Ascending aorta (tissue), 2 donors: ENCODE measurements at regions of chr16 and their contacts with region 1.

Region 1: DNA sequence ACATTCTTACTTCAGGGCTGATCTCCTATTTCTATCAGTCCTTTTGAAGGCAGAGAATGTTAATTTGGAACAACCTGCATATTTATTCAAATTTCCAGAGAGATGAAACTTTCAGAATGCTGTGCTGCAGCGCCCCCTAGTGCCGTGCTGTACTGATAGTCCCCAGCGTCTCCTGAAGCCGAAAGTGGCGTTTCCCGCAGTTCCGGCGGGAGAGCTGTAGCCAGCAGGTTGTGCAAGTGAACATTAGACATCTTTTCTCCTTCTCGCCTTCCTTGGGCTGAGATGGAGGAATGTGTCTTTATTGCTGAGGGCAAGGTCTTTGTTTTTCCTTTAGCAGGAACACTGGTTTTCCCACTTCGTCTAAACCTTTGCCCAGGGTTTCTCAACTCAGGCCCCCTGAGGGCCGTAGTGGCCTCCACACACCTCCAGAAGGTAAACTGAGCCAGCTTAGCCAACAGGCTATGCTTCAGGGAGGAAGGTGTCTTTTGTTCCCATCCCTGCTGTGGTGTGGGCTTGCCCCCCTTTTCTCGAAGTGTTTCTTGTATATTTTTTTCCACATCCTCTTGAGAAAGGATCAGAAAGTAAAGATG is 26.4 kb downstream of the USP10 start:
- DNase-seq: peak; percentile 50 to 94
- H3K4me3 ChIP-seq: peak overlapping the region in 1 of 2 donors; percentile 11
- H3K27ac ChIP-seq: peak overlapping the region in 1 of 2 donors; percentile 10
- H3K4me1 ChIP-seq: peaks cover 6 to 14% of the 10 kb centered on the region in 2 donors
- H3K27me3 ChIP-seq: no peaks in the 10 kb centered on the region
- CTCF ChIP-seq: peak; percentile 89 to 92 (median 89)

Region 2: GRCh38 chr16:84511180-84511824 is 214.9 kb before region 1 on chr16:
- intact Hi-C with region 1: loop called (anchors 1 kb)
- DNase-seq: peak; percentile 46 to 93
- H3K4me3 ChIP-seq: peak overlapping the region in 1 of 2 donors; percentile 4
- H3K27ac ChIP-seq: no peak overlapping the region
- H3K4me1 ChIP-seq: no peaks in the 10 kb centered on the region
- H3K27me3 ChIP-seq: no peaks in the 10 kb centered on the region
- CTCF ChIP-seq: peak; percentile 95 to 98 (median 95)

Region 3: DNA sequence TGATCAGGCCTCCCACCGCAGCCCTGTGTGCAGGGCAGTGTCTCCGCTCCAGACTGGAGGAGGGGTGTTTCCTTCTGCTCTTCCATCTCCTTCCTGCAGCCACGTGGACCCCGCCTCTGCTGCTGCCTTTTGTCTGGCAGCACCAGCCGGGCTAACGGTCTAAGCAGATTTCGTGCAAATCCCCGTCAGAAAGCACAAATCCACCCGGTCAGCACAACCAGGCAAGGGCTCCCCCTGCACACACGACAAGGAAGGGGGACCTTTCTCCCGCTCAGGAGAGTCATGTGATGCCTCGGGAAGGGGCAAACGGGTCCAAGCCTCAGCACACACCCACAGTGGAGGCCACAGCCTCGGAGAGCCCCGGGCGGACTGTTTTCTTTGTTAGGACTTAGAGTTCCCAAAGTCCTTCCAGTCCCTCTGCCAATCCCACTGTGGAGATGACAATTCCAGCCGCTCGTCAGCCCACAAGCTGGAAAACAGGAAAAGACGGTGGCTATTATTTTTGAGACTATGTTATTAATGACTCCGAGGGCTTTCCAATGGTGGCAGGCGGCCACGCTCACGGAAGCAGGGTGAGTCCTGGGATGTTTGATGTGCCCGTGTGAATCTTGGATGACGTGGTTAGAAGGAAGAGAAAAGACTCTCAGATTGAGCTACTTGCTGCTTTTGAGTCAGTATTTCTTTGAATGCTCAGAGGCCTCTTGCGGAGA is 199.2 kb before region 1 on chr16:
- intact Hi-C with region 1: loop called (anchors 5 kb)
- DNase-seq: no peak
- H3K4me3 ChIP-seq: peak overlapping the region; percentile 5 to 47
- H3K27ac ChIP-seq: peak overlapping the region; percentile 69 to 77
- H3K4me1 ChIP-seq: peaks cover 19 to 24% of the 10 kb centered on the region in 2 donors
- H3K27me3 ChIP-seq: no peaks in the 10 kb centered on the region
- CTCF ChIP-seq: no peak

Region 4: GRCh38 chr16:84647828-84648594 is 78.2 kb before region 1 on chr16 and contains the start of gene KLHL36:
- intact Hi-C with region 1: loop called (anchors 2 kb)
- DNase-seq: peak in 1 of 2 donors; percentile 81
- H3K4me3 ChIP-seq: peak within 1 kb of the TSS; percentile 71 to 78
- H3K27ac ChIP-seq: peak within 1 kb of the TSS; percentile 75 to 83
- H3K4me1 ChIP-seq: peaks cover 5 to 23% of the 10 kb centered on the region in 2 donors
- H3K27me3 ChIP-seq: no peaks in the 10 kb centered on the region
- CTCF ChIP-seq: peak in 1 of 3 experiments; percentile 16
- total RNA-seq, gene KLHL36: 65.1 TPM

Region 5: DNA sequence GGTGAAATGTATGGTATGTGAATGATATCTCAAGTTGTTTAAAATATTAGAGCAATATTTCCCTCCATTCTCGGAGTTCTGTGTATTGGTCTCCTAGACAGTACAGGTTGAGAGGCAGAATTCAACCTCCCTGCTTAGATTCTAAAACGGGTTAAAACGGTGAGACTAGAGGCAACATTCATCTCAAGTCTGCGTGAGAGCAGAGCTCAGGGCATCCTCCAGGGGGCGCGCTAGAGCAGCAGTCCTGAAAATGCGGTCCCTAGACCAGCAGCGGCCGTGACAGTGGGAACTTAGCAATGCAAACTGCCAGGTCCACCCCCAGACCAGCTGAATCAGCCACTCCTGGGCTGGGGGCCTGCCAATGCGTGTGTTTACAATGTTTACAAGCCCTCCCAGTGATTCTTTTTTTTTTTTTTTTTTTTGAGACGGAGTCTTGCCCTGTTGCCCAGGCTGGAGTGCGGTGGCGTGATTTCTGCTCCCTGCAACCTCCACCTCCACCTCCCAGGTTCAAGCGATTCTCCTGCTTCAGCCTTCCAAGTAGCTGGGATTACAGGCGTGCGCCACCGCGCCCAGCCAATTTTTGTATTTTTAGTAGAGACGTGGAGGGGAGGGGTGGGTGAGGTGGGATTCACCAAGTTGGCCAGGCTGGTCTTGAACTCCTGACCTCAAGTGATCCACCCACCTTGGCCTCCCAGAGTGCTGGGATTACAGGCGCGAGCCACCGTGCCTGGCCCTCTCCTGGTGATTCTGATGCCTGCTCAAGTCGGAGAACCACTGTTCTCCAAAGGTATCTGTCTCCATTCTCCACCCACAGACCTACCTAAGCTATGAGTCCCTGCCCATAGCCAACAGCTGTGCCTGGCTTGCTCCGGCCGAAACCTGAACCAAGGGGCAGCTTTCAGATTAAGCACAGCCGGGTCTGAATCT is 53.6 kb before region 1 on chr16:
- intact Hi-C with region 1: loop called (anchors 1 kb)
- DNase-seq: peak in 1 of 2 donors; percentile 84
- H3K4me3 ChIP-seq: no peak overlapping the region
- H3K27ac ChIP-seq: no peak overlapping the region
- H3K4me1 ChIP-seq: no peaks in the 10 kb centered on the region
- H3K27me3 ChIP-seq: no peaks in the 10 kb centered on the region
- CTCF ChIP-seq: peak; percentile 87 to 95 (median 92)